ENCODE measurements at regions of chr14 and their contacts with region 1.

Region 1: DNA sequence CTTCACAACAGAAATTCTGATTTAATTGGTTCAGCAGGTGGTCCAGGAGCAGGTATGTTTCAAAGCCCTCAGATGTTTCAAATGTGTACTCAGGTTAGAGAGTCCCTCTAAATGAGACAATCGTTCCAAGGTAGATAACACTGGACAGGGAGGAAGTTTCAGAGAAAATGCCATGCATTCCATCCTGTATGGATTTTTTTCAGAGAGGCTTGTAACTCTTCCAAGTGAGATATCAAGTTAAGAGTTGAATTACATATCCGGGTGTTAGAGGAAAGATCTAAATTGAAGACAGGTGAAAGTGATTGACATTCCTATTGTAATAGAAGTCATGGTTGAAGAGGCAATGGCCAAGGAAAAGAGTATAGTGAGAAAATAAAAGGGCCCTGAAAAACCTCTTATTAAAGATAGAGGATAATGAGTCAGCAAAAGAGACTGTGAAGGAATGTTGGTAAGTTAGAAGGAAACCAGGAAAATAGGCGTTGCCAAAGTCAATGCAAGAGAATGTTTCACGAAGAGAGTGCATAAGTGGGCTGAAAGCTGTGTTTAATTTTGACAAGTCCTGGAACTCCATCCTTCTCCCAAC is 105.8 kb downstream of the BMP4 start:
- DNase-seq: peak; percentile 47 to 96
- H3K4me3 ChIP-seq: peak overlapping the region; percentile 26
- H3K27ac ChIP-seq: peak overlapping the region; percentile 88
- H3K4me1 ChIP-seq: peaks cover 38% of the 10 kb centered on the region
- H3K27me3 ChIP-seq: no peaks in the 10 kb centered on the region
- CTCF ChIP-seq: no peak

Region 2: GRCh38 chr14:53458368-53458814 is 392.4 kb before region 1 on chr14:
- CTCF ChIA-PET with region 1: no interaction called
- POLR2A ChIA-PET with region 1: no interaction called
- intact Hi-C with region 1: loop called (anchors 1 kb)
- DNase-seq: peak; percentile 54 to 91
- H3K4me3 ChIP-seq: no peak overlapping the region
- H3K27ac ChIP-seq: peak overlapping the region; percentile 43
- H3K4me1 ChIP-seq: peaks cover 18% of the 10 kb centered on the region
- H3K27me3 ChIP-seq: no peaks in the 10 kb centered on the region
- CTCF ChIP-seq: no peak

Region 3: GRCh38 chr14:53539489-53540126 is 311.2 kb before region 1 on chr14:
- CTCF ChIA-PET with region 1: no interaction called
- POLR2A ChIA-PET with region 1: no interaction called
- intact Hi-C with region 1: loop called (anchors 2 kb)
- DNase-seq: peak; percentile 45 to 74
- H3K4me3 ChIP-seq: no peak overlapping the region
- H3K27ac ChIP-seq: no peak overlapping the region
- H3K4me1 ChIP-seq: no peaks in the 10 kb centered on the region
- H3K27me3 ChIP-seq: no peaks in the 10 kb centered on the region
- CTCF ChIP-seq: peak; percentile 88

Region 4: GRCh38 chr14:53793790-53794505 is 56.9 kb before region 1 on chr14:
- CTCF ChIA-PET with region 1: no interaction called
- POLR2A ChIA-PET with region 1: no interaction called
- intact Hi-C with region 1: no loop called
- DNase-seq: no peak
- H3K4me3 ChIP-seq: no peak overlapping the region
- H3K27ac ChIP-seq: no peak overlapping the region
- H3K4me1 ChIP-seq: no peaks in the 10 kb centered on the region; the same call in 1 of the 2 replicates
- H3K27me3 ChIP-seq: no peaks in the 10 kb centered on the region
- CTCF ChIP-seq: no peak

Region 5: GRCh38 chr14:53924754-53925153 is 73.9 kb after region 1 on chr14:
- CTCF ChIA-PET with region 1: no interaction called
- POLR2A ChIA-PET with region 1: no interaction called
- intact Hi-C with region 1: loop called (anchors 2 kb)
- DNase-seq: peak in 1 of 2 experiments; percentile 94
- H3K4me3 ChIP-seq: no peak overlapping the region
- H3K27ac ChIP-seq: peak overlapping the region; percentile 52
- H3K4me1 ChIP-seq: peaks cover 32% of the 10 kb centered on the region
- H3K27me3 ChIP-seq: no peaks in the 10 kb centered on the region
- CTCF ChIP-seq: no peak

Region 6: GRCh38 chr14:53946404-53947096 is 95.7 kb after region 1 on chr14:
- CTCF ChIA-PET with region 1: interaction called, 3 read pairs
- POLR2A ChIA-PET with region 1: no interaction called
- intact Hi-C with region 1: loop called (anchors 5 kb)
- DNase-seq: no peak
- H3K4me3 ChIP-seq: no peak overlapping the region
- H3K27ac ChIP-seq: no peak overlapping the region
- H3K4me1 ChIP-seq: no peaks in the 10 kb centered on the region
- H3K27me3 ChIP-seq: no peaks in the 10 kb centered on the region
- CTCF ChIP-seq: no peak